ENCODE measurements at regions of chr4 and their contacts with region 1.

Region 1: GRCh38 chr4:95549246-95550114 is 707 bp upstream of the UNC5C start:
- DNase-seq: peak; percentile 38
- ATAC-seq: peak; percentile 75
- H3K4me3 ChIP-seq: peak overlapping the region; percentile 46; the same call in 1 of the 2 replicates
- H3K27ac ChIP-seq: no peak overlapping the region
- H3K4me1 ChIP-seq: no peaks in the 10 kb centered on the region
- H3K27me3 ChIP-seq: peaks cover 0 to 17% of the 10 kb centered on the region in 2 experiments; a peak in 2 of 4 replicates
- CTCF ChIP-seq: no peak
- EP300 ChIP-seq: peak; percentile 67 to 70; a peak in 2 of 4 replicates
- POLR2A ChIP-seq: no peak
- RAD21 ChIP-seq: no peak

Region 2: GRCh38 chr4:95528388-95528948 is 21.0 kb before region 1 on chr4:
- CTCF ChIA-PET with region 1: interaction called, 32 read pairs
- POLR2A ChIA-PET with region 1: interaction called, 8 read pairs
- RAD21 ChIA-PET with region 1: interaction called, 14 read pairs
- SMC1A ChIA-PET with region 1: interaction called, 131 read pairs
- in situ Hi-C with region 1: no loop called
- intact Hi-C with region 1: no loop called
- DNase-seq: no peak
- ATAC-seq: peak; percentile 50
- H3K4me3 ChIP-seq: no peak overlapping the region
- H3K27ac ChIP-seq: no peak overlapping the region
- H3K4me1 ChIP-seq: no peaks in the 10 kb centered on the region; the same call in 1 of the 2 replicates
- H3K27me3 ChIP-seq: no peaks in the 10 kb centered on the region
- CTCF ChIP-seq: no peak
- EP300 ChIP-seq: no peak
- POLR2A ChIP-seq: no peak
- RAD21 ChIP-seq: no peak

Region 3: GRCh38 chr4:95537191-95537590 is 12.3 kb before region 1 on chr4:
- CTCF ChIA-PET with region 1: interaction called, 5 read pairs
- POLR2A ChIA-PET with region 1: interaction called, 4 read pairs
- RAD21 ChIA-PET with region 1: interaction called, 16 read pairs
- SMC1A ChIA-PET with region 1: interaction called, 6 read pairs
- in situ Hi-C with region 1: no loop called
- intact Hi-C with region 1: loop called (anchors 1 kb)
- DNase-seq: no peak
- ATAC-seq: peak; percentile 46
- H3K4me3 ChIP-seq: no peak overlapping the region
- H3K27ac ChIP-seq: no peak overlapping the region
- H3K4me1 ChIP-seq: no peaks in the 10 kb centered on the region
- H3K27me3 ChIP-seq: no peaks in the 10 kb centered on the region
- CTCF ChIP-seq: no peak
- EP300 ChIP-seq: 0 out of 4 replicates have a peak, but pooled peaks of 1 of the 2 experiments have one; percentile 26
- POLR2A ChIP-seq: no peak
- RAD21 ChIP-seq: no peak

Region 4: GRCh38 chr4:95599777-95600400 is 50.4 kb after region 1 on chr4:
- CTCF ChIA-PET with region 1: no interaction called
- POLR2A ChIA-PET with region 1: interaction called, 3 read pairs
- RAD21 ChIA-PET with region 1: interaction called, 4 read pairs
- SMC1A ChIA-PET with region 1: interaction called, 3 read pairs
- in situ Hi-C with region 1: no loop called
- intact Hi-C with region 1: loop called (anchors 2 kb)
- DNase-seq: peak; percentile 13
- ATAC-seq: peak; percentile 97
- H3K4me3 ChIP-seq: no peak overlapping the region
- H3K27ac ChIP-seq: no peak overlapping the region
- H3K4me1 ChIP-seq: no peaks in the 10 kb centered on the region; the same call in 1 of the 2 replicates
- H3K27me3 ChIP-seq: no peaks in the 10 kb centered on the region
- CTCF ChIP-seq: no peak
- EP300 ChIP-seq: no peak
- POLR2A ChIP-seq: no peak
- RAD21 ChIP-seq: no peak